ENCODE measurements at regions of chr15 and their contacts with region 1.

Region 1: DNA sequence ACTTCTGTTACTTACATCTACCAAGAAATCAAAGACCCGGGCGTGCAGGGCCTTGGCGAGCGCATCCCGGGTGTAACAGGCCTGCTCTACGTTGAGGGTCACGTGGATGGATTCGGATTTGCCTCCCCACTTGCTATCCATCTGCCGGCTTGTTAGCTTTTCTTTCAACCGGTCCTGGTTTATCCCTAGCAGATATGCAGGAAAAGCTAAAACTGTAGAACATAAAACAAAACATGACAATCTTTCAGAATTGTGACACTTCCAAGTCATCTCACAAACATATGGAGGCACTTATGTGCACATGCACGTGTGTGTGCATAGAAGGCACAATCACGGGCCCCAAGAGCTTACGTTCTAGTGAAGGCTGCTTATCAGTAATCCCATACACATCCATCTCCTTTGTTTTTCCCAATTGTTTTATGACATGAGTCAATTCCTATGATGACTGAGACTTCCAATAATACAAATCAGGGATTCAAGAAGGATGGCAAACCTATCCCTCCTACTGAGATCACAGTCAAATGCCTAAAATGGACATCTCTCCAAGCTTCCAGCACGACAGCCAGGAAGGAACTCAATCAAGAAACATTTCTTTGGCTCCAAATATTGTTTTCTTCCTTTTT is 11.3 kb downstream of the LDHAL6B start:
- DNase-seq: no peak
- ATAC-seq: no peak
- H3K4me3 ChIP-seq: no peak overlapping the region
- H3K27ac ChIP-seq: no peak overlapping the region
- H3K4me1 ChIP-seq: no peaks in the 10 kb centered on the region
- H3K27me3 ChIP-seq: no peaks in the 10 kb centered on the region
- CTCF ChIP-seq: no peak
- EP300 ChIP-seq: no peak
- POLR2A ChIP-seq: no peak
- RAD21 ChIP-seq: no peak

Region 2: GRCh38 chr15:59205839-59206622 is 12.0 kb before region 1 on chr15:
- CTCF ChIA-PET with region 1: no interaction called
- POLR2A ChIA-PET with region 1: no interaction called
- RAD21 ChIA-PET with region 1: no interaction called
- SMC1A ChIA-PET with region 1: interaction called, 11 read pairs
- in situ Hi-C with region 1: no loop called
- intact Hi-C with region 1: no loop called
- DNase-seq: peak; percentile 5
- ATAC-seq: peak; percentile 88
- H3K4me3 ChIP-seq: no peak overlapping the region
- H3K27ac ChIP-seq: peak overlapping the region; percentile 22; the same call in 1 of the 2 replicates
- H3K4me1 ChIP-seq: no peaks in the 10 kb centered on the region; the same call in 1 of the 2 replicates
- H3K27me3 ChIP-seq: no peaks in the 10 kb centered on the region
- CTCF ChIP-seq: no peak
- EP300 ChIP-seq: no peak
- POLR2A ChIP-seq: no peak
- RAD21 ChIP-seq: no peak

Measured in GM12878 (cell line).